Right cardiac atrium (tissue), 5 donors: ENCODE measurements at regions of chr1 and their contacts with region 1.

Region 1: GRCh38 chr1:12619792-12620487 is 1.9 kb upstream of the DHRS3 start:
- DNase-seq: peak; percentile 87 to 95 (median 94)
- ATAC-seq: peak; percentile 62 to 67
- H3K4me3 ChIP-seq: peak overlapping the region; percentile 78
- H3K27ac ChIP-seq: peak overlapping the region; percentile 80
- H3K4me1 ChIP-seq: peaks cover 13% of the 10 kb centered on the region
- H3K27me3 ChIP-seq: no peaks in the 10 kb centered on the region

Region 2: DNA sequence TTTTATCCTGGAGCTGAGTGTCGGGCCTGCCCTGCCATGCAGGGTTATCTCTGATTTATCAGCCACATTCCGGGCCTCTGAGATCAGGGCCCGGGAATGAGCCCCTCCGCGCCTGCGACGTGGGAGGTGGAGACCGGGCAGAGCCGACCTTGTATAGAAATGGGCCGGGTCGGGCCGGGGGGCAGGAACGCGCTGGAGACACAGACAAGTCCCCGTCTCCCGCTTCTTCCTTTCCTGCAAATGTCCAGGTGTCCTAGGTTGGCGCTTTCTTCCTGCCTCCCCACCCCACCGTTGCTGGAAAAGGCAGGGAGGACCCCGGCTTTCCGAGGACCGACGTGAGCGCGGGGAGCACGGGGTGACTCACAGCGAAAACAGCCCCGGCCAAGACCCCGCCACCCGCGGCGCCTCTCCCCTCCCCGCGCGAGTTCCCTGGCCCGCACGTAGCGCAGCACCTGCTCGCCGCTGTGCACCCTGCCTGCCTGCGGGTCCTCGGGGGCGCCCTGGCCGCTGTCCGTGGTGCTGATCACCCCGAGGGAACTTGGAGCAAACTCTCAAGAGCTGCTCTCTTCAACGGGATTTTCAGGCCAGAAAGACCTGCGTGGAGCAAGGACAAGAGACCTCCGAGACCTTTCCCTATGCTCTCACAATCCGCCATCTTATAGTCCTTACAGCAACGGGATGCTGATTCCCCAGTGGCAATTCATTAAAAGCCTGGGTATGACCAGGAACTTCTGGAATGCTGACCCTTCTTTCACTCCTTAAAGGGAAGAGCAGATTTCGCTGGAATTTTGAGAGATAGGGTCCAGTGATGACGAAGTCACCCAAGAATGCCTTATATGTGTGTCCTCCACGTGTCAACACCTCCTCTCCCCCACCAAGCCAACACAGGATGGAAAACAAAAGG is 760.7 kb before region 1 on chr1:
- intact Hi-C with region 1: no loop called
- DNase-seq: peak; percentile 76 to 90 (median 89)
- ATAC-seq: peak; percentile 68 to 78
- H3K4me3 ChIP-seq: no peak overlapping the region
- H3K27ac ChIP-seq: no peak overlapping the region
- H3K4me1 ChIP-seq: no peaks in the 10 kb centered on the region
- H3K27me3 ChIP-seq: no peaks in the 10 kb centered on the region

Region 3: DNA sequence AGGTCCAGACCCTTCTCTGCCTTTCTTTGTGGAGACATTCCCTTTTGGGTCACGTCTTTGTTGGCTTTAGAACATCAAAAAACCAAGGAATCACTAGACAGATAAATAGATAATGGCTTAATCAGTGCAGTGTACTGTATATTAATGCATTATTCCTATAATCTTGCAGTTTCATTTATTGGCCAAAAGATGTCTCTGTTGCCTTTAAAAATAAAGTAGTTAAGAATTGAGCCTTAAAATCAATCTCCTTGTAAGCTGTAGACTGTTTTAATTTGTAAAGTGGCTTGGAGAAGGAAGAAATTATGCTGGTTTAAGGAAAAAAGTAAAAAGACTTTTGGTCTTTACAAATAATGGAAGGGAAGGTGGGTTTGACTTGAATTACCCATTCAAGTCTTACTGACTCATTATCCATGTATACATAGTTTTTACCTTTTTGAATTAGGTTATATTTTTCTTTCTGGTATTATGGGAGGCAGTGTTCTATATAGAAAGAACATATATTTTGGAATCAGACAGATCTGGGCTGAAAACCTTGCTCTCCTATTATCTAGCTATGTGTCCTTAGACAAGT is 305.5 kb before region 1 on chr1:
- intact Hi-C with region 1: loop called in 3 of 4 experiments (anchors 5 to 10 kb)
- DNase-seq: no peak
- ATAC-seq: peak; percentile 34 to 35
- H3K4me3 ChIP-seq: no peak overlapping the region
- H3K27ac ChIP-seq: no peak overlapping the region
- H3K4me1 ChIP-seq: no peaks in the 10 kb centered on the region
- H3K27me3 ChIP-seq: no peaks in the 10 kb centered on the region

Region 4: GRCh38 chr1:12407050-12407961 is 212.6 kb before region 1 on chr1:
- intact Hi-C with region 1: loop called in 2 of 4 experiments (anchors 5 kb)
- DNase-seq: no peak
- ATAC-seq: peak; percentile 57 to 60
- H3K4me3 ChIP-seq: no peak overlapping the region
- H3K27ac ChIP-seq: no peak overlapping the region
- H3K4me1 ChIP-seq: peaks cover 8% of the 10 kb centered on the region
- H3K27me3 ChIP-seq: no peaks in the 10 kb centered on the region

Region 5: DNA sequence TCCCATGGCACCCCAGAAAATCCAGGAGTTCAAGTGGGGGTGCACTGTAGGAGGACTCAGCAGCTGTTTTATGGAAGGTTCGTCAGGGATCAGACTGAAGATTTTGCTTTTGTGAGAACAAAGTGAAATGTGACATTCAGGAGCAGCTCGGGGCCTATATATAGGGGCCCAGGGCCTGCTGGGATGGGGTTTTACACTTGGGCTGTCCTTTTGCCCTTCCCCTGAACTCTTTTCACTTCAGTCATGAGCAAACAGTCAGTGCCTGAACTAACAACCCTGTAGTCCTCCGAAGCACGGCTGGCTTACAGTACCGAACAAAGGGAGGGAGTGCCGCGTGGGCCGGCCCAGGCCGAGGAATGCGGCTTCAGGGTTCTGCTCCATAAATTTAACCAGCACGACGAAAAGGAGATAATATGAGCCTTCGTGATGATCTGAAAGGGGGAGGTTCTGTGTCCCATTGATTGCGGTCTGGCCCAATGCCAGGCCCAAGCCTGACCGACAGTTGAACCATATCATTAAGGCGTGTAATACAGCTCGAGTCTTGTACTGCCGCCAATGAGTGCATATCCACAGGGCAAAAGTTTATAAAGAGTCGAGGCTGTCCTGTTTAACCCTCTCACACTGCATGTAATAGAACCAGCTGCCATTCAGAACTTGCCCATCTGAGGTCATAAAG is 141.9 kb before region 1 on chr1:
- intact Hi-C with region 1: loop called in 2 of 4 experiments (anchors 10 kb)
- DNase-seq: peak; percentile 82 to 95 (median 92)
- ATAC-seq: peak; percentile 86
- H3K4me3 ChIP-seq: no peak overlapping the region
- H3K27ac ChIP-seq: peak overlapping the region; percentile 90
- H3K4me1 ChIP-seq: peaks cover 49% of the 10 kb centered on the region
- H3K27me3 ChIP-seq: no peaks in the 10 kb centered on the region

Region 6: DNA sequence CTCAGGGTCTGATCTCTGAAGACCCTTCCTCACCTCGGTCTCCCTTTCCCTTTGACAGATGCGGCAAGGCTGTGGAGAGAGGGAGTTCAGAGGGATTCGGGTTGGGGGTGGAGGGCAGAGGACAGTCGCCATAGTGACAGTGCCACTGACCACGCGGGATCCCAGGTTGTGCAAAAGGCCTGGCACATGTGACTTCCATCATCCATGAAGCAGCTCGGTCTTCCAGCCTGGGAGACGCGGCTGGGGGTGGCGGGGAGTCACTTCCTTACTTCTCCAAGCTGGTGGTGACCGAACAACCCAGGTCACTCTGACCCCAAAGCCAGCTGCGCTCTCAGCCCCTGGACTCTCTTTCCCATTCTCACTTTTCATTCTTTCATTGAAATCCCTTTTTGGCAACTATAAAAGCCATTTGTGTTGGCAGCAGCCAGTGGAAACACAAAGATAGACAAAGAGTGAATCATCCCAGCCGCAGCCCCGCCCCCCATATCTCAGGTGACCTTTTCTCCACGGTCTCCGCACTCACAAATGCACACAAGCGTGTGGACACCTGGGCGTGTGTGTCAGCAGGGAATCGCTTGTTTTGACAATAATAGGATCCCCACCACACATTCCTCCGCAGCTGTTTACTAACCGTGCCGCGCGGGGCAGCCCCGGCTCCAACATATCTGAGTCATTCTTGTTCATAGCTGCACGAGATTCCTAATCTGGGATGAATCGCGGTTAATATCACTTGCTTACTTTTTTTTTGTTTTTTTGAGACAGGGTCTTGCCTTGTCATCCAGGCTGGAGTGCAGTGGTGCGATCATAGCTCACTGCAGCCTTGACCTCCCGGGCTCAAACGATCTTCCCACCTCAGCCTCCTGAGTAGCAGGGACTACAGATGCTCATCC is 70.2 kb before region 1 on chr1:
- intact Hi-C with region 1: loop called in 1 of 4 experiments (anchors 10 kb)
- DNase-seq: peak; percentile 76 to 91 (median 87)
- ATAC-seq: peak; percentile 4 to 57
- H3K4me3 ChIP-seq: no peak overlapping the region
- H3K27ac ChIP-seq: peak overlapping the region; percentile 75
- H3K4me1 ChIP-seq: peaks cover 16% of the 10 kb centered on the region
- H3K27me3 ChIP-seq: no peaks in the 10 kb centered on the region

Region 7: DNA sequence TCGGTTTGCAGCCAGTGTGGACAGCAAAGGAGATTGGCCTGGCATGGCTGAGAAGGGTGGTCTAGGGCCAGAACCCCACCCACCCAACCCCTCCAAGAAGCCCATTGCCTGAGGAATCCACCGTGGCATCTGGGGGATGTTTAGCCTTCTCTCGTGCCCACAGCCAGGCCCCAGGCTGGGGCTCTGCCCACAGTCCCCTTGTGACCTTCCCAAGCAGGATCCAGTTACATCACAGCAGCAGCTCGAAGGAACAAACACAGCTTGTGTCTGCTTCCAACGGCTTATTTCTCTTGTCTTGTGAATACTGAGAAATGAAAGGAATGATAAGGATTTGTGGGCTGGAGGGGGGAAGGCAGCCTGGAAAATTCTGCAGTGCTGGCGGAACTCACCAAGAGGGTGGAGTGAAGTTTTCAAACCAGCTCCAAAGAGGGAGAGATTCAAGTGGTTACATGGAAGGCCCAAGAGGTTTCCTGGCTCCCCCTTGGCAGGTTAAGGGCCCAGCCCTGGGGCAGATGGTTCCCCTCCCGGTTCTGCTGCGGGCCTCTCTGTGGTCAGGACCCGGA is 63.5 kb before region 1 on chr1:
- intact Hi-C with region 1: loop called in 2 of 4 experiments (anchors 5 to 10 kb)
- DNase-seq: peak; percentile 73 to 92 (median 87)
- ATAC-seq: peak; percentile 80 to 81
- H3K4me3 ChIP-seq: no peak overlapping the region
- H3K27ac ChIP-seq: peak overlapping the region; percentile 71
- H3K4me1 ChIP-seq: peaks cover 11% of the 10 kb centered on the region
- H3K27me3 ChIP-seq: no peaks in the 10 kb centered on the region